Panc1 (cell line): ENCODE measurements at regions of chr2 and their contacts with region 1.

Region 1: GRCh38 chr2:73212448-73213176 is 1.4 kb upstream of the SMYD5 start:
- DNase-seq: peak; percentile 58
- ATAC-seq: peak; percentile 87
- H3K4me3 ChIP-seq: peak overlapping the region; percentile 68 to 90
- H3K27ac ChIP-seq: no peak overlapping the region
- H3K4me1 ChIP-seq: peaks cover 6% of the 10 kb centered on the region; the same call in 1 of the 2 replicates
- H3K27me3 ChIP-seq: no peaks in the 10 kb centered on the region
- CTCF ChIP-seq: peak; percentile 98

Region 2: GRCh38 chr2:73225513-73226360 is 13.1 kb after region 1 on chr2:
- CTCF ChIA-PET with region 1: no interaction called
- POLR2A ChIA-PET with region 1: no interaction called
- in situ Hi-C with region 1: no loop called
- intact Hi-C with region 1: no loop called
- DNase-seq: no peak
- ATAC-seq: no peak
- H3K4me3 ChIP-seq: no peak overlapping the region
- H3K27ac ChIP-seq: no peak overlapping the region
- H3K4me1 ChIP-seq: no peaks in the 10 kb centered on the region
- H3K27me3 ChIP-seq: no peaks in the 10 kb centered on the region
- CTCF ChIP-seq: no peak

Region 3: DNA sequence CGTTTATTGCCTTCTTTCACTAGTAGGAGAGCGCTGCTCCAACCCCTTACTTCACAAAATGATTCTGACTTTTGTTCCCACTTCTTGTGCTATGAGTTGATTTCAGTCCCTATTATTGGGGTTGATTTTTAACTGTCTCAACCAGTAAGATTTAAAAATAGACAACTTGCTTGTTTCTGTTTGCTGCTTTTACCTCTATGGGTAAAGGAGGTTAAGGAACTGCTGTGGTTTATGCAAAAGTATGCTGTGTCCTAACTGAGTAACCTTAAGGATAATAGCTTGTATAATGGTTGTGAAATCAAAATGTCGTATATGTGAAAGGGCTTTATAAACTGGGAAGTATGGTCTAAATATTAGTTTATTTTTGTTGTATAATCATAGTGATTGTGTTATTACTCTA is 195.6 kb after region 1 on chr2:
- CTCF ChIA-PET with region 1: no interaction called
- POLR2A ChIA-PET with region 1: interaction called, 15 read pairs
- in situ Hi-C with region 1: no loop called
- intact Hi-C with region 1: no loop called
- DNase-seq: no peak
- ATAC-seq: no peak
- H3K4me3 ChIP-seq: no peak overlapping the region
- H3K27ac ChIP-seq: no peak overlapping the region
- H3K4me1 ChIP-seq: no peaks in the 10 kb centered on the region
- H3K27me3 ChIP-seq: no peaks in the 10 kb centered on the region
- CTCF ChIP-seq: no peak